ENCODE measurements at regions of chr6 and their contacts with region 1.

Region 1: GRCh38 chr6:71510057-71510713 is 221.6 kb downstream of the OGFRL1 start:
- DNase-seq: peak; percentile 77
- H3K4me3 ChIP-seq: no peak overlapping the region
- H3K27ac ChIP-seq: no peak overlapping the region
- H3K4me1 ChIP-seq: peaks cover 8% of the 10 kb centered on the region
- H3K27me3 ChIP-seq: no peaks in the 10 kb centered on the region

Region 2: DNA sequence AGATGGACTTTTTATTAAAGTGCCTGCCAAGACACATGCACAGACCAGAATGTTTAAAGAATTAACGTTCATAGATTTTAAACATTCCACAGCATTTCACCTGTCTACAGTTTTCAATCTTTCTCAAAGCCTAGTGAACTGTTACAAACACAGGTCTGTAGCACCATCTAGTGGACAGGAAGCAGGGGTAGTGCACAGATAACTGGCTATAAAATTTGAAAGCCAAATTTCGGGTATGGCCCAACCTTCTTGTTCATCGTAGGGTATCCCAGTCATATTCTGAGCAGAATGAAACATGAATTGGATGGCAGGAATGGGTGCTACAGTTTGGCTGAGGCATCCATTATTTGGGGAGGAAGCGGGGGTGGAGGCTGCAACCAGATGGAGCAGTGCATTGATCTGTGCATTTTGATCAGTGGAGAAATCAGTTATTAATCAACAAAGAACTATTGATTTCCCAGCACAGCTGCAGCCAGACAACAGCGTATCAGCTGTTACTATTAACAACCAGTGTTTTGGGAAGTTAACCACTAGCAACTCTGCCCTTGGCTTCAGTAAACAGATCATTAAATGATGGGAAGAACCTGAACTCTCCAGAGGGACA is 497.2 kb before region 1 on chr6:
- in situ Hi-C with region 1: no loop called
- DNase-seq: peak; percentile 66
- H3K4me3 ChIP-seq: no peak overlapping the region
- H3K27ac ChIP-seq: no peak overlapping the region
- H3K4me1 ChIP-seq: no peaks in the 10 kb centered on the region
- H3K27me3 ChIP-seq: no peaks in the 10 kb centered on the region; the same call in 1 of the 2 replicates

Region 3: DNA sequence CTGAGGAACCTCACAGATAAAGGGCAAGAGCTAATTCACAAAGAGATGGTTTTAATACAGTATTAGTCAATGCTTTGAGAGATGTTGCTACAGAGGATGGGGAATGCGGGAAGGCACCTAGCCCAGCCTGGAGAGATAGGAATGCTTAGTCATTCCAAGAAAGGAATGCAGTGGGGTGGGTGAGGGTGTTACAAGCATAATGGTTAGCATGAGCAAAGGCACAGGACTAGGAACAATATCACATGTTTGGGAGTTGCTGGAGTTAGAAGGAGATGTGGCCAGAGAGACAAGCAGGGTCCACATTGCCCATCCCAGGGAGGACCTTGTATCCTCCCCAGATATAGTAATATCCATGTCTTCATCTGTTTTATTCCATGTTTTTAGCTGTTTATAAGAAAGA is 328.6 kb before region 1 on chr6:
- in situ Hi-C with region 1: loop called (anchors 10 kb)
- DNase-seq: peak; percentile 90
- H3K4me3 ChIP-seq: no peak overlapping the region
- H3K27ac ChIP-seq: peak overlapping the region; percentile 39; the same call in 1 of the 2 replicates
- H3K4me1 ChIP-seq: peaks cover 14% of the 10 kb centered on the region
- H3K27me3 ChIP-seq: no peaks in the 10 kb centered on the region

Measured in GM23248 (cell line).